ENCODE measurements at regions of chr2 and their contacts with region 1.

Region 1: DNA sequence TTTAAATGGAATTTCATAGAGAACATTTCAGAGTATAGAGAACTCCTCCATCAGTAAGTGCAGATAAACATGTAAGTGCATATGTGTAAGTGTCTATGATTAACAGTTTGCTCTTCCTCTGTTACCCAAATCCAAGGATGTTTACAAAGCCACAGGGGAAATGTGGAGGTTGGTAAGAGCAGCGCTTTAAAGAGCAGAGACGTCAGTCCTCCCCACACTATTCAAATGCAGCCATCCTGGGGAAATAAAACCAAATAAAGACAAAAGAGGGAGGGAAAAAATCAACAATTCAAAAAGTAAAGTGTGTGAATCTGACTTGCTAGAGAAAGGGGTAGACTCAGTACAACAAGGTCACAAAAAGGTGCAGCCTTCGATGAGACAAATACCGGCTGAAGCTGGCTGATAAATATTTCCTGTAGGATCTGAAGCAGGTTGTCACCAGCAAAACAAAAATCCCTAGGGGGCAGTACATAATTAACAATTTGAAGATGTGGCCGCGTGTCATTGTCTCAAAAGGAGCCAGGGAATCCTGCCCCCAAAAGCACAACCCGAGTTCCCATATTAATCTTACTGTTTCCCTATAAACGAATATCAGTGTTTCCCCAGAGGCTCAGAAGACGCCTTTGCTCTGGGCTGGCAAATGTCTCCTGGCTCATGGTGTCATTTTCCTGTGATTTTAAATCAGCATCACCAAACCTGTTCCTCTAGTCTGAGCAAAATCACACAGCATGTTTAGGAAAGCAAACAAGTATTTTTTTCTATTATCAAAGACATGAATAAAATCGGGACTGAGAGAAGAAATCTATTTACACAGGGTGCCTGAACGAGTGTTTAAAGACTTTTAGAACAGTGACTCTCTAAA is 216.6 kb downstream of the CDCA7 start:
- DNase-seq: peak in 1 of 2 experiments; percentile 50
- H3K4me3 ChIP-seq: no peak overlapping the region
- H3K4me3 Mint-ChIP-seq: peak overlapping the region; percentile 32
- H3K27ac Mint-ChIP-seq: no peak overlapping the region
- H3K4me1 ChIP-seq: peaks cover 15% of the 10 kb centered on the region; the same call in 1 of the 2 replicates
- H3K4me1 Mint-ChIP-seq: peaks cover 12% of the 10 kb centered on the region
- H3K27me3 ChIP-seq: no peaks in the 10 kb centered on the region
- H3K27me3 Mint-ChIP-seq: no peaks in the 10 kb centered on the region
- CTCF ChIP-seq: peak; percentile 37 to 40

Region 2: DNA sequence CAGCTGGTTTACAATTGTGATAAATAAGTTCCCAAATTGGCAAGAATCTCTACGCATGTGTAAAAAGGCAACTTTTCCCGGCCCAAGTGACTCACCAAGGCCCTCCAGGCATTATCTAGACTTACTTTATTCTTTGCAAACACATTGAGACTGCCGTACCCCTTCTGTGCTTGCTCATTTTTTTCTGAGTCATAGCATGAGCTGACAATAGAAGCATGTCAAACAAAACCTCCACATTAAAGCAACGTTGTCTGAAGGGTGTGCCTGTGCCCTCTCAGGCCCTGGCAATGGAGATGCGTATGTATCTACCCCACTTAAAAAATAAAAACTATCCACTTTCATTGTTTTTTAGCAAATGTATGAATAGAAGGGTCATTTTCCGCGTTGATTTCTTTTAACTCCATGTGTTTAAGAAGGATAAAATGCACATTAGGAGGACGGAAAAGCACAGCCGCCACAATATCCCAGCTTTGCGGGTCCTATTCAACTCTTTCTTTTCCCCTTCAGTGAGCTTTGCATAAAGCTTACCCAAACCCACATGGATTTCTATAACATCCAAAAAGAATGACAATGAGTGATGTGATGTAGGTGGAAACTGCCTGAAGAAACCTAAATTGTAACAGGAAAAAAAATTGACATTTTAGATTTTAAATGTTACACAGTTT is 81.6 kb after region 1 on chr2:
- CTCF ChIA-PET with region 1: no interaction called
- POLR2A ChIA-PET with region 1: no interaction called
- intact Hi-C with region 1: loop called (anchors 5 kb)
- DNase-seq: peak; percentile 70 to 72
- H3K4me3 ChIP-seq: no peak overlapping the region
- H3K4me3 Mint-ChIP-seq: no peak overlapping the region
- H3K27ac Mint-ChIP-seq: peak overlapping the region; percentile 53
- H3K4me1 ChIP-seq: peaks cover 36% of the 10 kb centered on the region
- H3K4me1 Mint-ChIP-seq: peaks cover 13% of the 10 kb centered on the region
- H3K27me3 ChIP-seq: no peaks in the 10 kb centered on the region
- H3K27me3 Mint-ChIP-seq: no peaks in the 10 kb centered on the region
- CTCF ChIP-seq: no peak

Region 3: DNA sequence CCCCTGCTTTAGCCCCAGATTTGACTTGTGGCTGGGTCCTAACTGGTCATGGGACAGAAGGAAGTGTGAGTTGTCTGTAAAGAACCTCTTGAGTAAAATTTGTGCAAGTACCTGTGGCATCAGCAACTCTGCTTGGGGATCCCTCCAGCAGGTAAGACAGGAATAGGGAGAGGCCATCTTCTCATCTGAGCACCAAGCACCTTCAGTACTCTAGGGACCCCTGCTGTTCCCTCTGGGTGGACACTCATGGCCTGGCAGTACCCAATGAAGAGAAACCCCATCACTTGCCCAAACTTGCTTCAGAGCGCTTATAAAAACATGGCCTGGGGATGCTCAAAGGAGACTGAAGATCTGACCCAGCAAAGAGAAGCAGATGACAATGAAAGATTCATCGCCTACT is 96.2 kb after region 1 on chr2:
- CTCF ChIA-PET with region 1: no interaction called
- POLR2A ChIA-PET with region 1: no interaction called
- intact Hi-C with region 1: loop called (anchors 1 kb)
- DNase-seq: peak; percentile 46 to 55
- H3K4me3 ChIP-seq: no peak overlapping the region
- H3K4me3 Mint-ChIP-seq: no peak overlapping the region
- H3K27ac Mint-ChIP-seq: no peak overlapping the region
- H3K4me1 ChIP-seq: peaks cover 6% of the 10 kb centered on the region; the same call in 1 of the 2 replicates
- H3K4me1 Mint-ChIP-seq: no peaks in the 10 kb centered on the region
- H3K27me3 ChIP-seq: no peaks in the 10 kb centered on the region; the same call in 1 of the 2 replicates
- H3K27me3 Mint-ChIP-seq: no peaks in the 10 kb centered on the region
- CTCF ChIP-seq: peak; percentile 35 to 54

Region 4: GRCh38 chr2:173749315-173749714 is 178.1 kb after region 1 on chr2:
- CTCF ChIA-PET with region 1: no interaction called
- POLR2A ChIA-PET with region 1: no interaction called
- intact Hi-C with region 1: loop called (anchors 1 kb)
- DNase-seq: peak in 1 of 2 experiments; percentile 38
- H3K4me3 ChIP-seq: no peak overlapping the region
- H3K4me3 Mint-ChIP-seq: no peak overlapping the region
- H3K27ac Mint-ChIP-seq: no peak overlapping the region
- H3K4me1 ChIP-seq: no peaks in the 10 kb centered on the region
- H3K4me1 Mint-ChIP-seq: peaks cover 5% of the 10 kb centered on the region
- H3K27me3 ChIP-seq: no peaks in the 10 kb centered on the region
- H3K27me3 Mint-ChIP-seq: peaks cover under 1% of the 10 kb centered on the region
- CTCF ChIP-seq: peak; percentile 52 to 62

Measured in Caco-2 (cell line).